PC-3 (cell line): ENCODE measurements at regions of chr7 and their contacts with region 1.

Region 1: DNA sequence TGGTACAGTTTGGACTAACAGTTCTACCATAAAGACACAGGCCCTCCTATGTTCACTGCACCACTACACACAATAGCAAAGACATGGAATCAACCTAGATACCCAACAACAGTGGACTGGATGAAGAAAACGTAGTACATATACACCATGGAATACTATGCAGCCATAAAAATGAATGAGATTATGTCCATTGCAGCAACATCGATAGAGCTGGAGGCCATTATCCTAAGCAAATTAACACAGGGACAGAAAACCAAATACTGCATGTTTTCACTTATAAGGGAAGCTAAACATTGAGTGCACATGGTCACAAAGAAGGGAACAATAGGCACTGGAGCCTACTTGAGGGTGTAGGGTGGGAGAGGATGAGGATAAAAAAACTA is 75.0 kb downstream of the MEST start:
- DNase-seq: no peak
- ATAC-seq: no peak
- H3K4me3 ChIP-seq: no peak overlapping the region
- H3K27ac ChIP-seq: no peak overlapping the region
- H3K4me1 ChIP-seq: no peaks in the 10 kb centered on the region
- H3K27me3 ChIP-seq: no peaks in the 10 kb centered on the region
- CTCF ChIP-seq: no peak

Region 2: DNA sequence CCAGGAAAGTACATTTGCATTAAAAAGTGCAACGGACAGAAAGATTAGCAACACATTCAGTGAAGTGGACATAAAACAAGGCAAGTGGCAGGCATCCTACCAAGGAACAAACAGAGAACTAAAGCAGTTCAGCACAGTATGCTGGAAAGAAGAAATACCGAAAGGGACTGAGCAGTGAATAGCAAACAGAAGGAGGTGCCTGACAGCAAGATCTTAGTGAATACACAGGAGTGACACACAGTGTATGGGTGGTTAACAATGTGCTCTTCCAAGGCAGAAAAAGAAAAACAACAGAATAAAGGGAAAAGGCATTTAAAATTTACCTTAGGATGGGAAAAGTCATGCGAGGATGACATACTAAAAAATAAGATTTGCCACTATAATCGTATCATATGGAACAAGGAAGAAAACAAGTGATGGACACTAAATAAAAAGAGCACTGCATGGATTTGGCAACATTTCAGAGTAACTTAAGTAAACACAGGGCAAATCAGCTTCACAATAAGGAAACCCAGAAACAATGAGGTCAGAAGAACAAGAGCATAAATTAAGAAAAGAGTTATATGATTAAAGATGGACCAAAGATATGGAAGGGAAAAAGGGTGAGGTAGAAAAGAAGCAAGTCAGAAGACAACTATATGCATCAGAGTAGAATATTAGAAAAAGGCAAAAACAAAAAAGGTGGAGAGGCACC is 45.5 kb before region 1 on chr7:
- CTCF ChIA-PET with region 1: no interaction called
- POLR2A ChIA-PET with region 1: no interaction called
- intact Hi-C with region 1: no loop called
- DNase-seq: no peak
- ATAC-seq: no peak
- H3K4me3 ChIP-seq: no peak overlapping the region
- H3K27ac ChIP-seq: no peak overlapping the region
- H3K4me1 ChIP-seq: no peaks in the 10 kb centered on the region
- H3K27me3 ChIP-seq: no peaks in the 10 kb centered on the region
- CTCF ChIP-seq: no peak

Region 3: GRCh38 chr7:130543487-130544010 is 23.3 kb before region 1 on chr7:
- CTCF ChIA-PET with region 1: no interaction called
- POLR2A ChIA-PET with region 1: no interaction called
- intact Hi-C with region 1: loop called (anchors 2 kb)
- DNase-seq: no peak
- ATAC-seq: no peak
- H3K4me3 ChIP-seq: no peak overlapping the region
- H3K27ac ChIP-seq: no peak overlapping the region
- H3K4me1 ChIP-seq: no peaks in the 10 kb centered on the region
- H3K27me3 ChIP-seq: no peaks in the 10 kb centered on the region
- CTCF ChIP-seq: no peak

Region 4: DNA sequence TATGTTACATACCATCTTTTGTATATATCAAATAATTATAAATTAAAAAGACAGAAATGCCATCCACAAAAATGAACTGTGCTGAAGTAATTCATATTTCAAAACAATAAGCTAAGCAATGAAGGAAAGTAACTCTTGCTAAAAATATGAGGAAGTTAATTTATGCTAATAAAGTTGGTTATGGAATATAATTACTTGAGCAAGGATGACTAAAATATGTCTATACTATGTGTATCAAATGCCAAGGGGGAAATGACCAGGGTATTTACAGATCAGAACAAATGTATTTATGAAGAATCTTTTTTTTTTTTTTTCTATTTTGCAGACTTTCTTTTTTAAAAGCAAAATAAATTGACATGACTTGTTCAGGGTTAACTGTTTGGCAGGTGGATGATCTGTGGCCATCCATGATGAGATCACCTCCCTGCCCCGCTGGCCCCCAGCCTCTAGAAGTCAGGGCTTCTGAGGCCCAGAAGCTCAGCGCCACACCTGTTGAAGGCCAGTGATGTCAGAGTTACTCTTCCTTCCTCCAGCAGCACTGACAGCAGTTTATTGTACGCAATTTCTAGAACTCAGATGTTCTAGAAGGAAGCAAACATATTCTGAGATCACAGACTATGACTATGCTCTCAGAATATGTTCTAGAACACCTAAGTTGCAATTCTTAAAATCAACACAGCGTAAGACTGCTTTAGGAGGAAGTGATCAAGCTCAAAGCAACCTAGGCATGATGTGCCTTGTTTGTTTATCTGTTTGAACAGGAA is 363.2 kb after region 1 on chr7:
- CTCF ChIA-PET with region 1: no interaction called
- POLR2A ChIA-PET with region 1: no interaction called
- intact Hi-C with region 1: no loop called
- DNase-seq: peak; percentile 55
- ATAC-seq: peak; percentile 60
- H3K4me3 ChIP-seq: no peak overlapping the region
- H3K27ac ChIP-seq: peak overlapping the region; percentile 5; the same call in 1 of the 2 replicates
- H3K4me1 ChIP-seq: peaks cover 21% of the 10 kb centered on the region
- H3K27me3 ChIP-seq: no peaks in the 10 kb centered on the region
- CTCF ChIP-seq: no peak